ENCODE measurements at regions of chr2 and their contacts with region 1.

Region 1: DNA sequence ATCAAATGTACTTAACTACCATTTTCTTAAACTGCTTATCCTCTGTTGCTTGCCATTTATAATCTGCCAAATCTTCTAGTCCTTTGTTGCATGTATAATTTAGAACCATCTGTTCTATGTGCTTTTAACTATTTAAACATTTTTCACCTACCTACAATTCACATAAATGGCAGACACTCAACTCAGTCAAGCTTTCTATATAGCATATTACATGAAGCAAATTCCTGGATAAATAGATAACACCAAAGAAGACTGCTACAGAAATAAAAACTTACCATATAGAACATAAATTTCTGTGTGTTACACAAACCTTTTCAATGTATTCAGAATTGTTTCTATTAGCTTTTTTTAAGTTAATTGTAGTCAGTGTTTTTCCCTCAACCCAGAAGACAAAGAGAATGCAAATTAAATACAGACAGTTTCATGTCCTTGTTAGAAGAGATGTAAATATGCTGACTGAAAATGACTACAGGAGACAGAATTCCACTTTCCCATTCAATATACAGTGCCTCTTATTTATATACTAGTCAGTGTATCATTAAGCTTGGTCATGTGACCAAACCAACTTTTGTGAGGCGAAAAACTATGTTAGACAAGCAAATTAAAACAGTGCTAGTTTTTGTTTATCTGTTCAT is 2.6 kb downstream of the BAZ2B start:
- DNase-seq: no peak
- H3K4me3 ChIP-seq: peak overlapping the region in 2 of 4 donors; percentile 80 to 84
- H3K27ac ChIP-seq: peak overlapping the region; percentile 93 to 99 (median 97)
- H3K4me1 ChIP-seq: peaks cover 7 to 63% of the 10 kb centered on the region in 2 donors
- H3K27me3 ChIP-seq: no peaks in the 10 kb centered on the region
- CTCF ChIP-seq: no peak
- POLR2A ChIP-seq: peak in 1 of 2 donors; percentile 18

Region 2: DNA sequence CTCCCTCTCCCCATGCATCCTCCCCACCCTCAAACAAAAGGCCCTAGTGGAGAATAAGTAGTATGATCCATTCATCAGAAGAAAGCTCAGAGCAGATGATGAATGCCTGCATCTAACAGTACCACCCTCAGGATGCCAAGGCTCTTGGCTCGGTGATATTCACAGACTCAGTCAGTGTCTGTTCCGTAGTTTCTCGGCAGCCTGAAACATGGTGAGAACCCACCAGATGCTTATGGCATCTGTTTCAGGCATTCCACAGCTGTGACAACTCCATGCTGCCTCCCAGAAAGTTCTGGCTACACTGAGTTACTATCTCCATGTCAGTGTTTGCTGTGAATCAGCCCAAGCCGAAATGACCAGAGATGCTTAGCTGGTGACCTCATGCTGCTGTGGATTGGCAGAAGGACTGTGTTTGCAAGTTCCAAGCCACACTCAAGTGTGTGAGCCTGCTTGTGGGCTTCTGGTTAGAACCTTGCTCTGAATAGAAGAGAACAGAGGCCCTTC is 411.1 kb before region 1 on chr2:
- intact Hi-C with region 1: no loop called
- DNase-seq: peak in 6 of 7 donors; percentile 26 to 73 (median 42)
- H3K4me3 ChIP-seq: no peak overlapping the region
- H3K27ac ChIP-seq: peak overlapping the region in 1 of 5 donors; percentile 39
- H3K4me1 ChIP-seq: peaks cover 0 to 3% of the 10 kb centered on the region in 2 donors
- H3K27me3 ChIP-seq: no peaks in the 10 kb centered on the region
- CTCF ChIP-seq: no peak
- POLR2A ChIP-seq: no peak

Region 3: DNA sequence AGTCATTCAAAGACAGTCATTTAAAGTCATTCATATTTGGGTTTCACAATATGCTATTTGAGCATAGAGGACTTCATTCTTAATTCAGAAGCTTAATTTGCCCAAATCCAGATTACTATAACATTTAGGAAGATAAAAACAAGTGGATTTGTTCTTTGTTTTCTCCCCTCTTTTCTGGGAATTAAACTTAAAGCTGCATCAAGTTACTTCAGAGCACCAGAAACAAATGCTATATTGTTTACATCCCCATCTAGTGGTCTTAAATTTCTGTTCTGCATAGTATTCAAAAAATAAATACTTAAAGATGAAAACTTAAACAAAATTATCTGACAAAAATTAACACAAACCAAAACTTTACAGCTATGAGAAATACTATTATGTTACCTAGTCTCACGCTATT is 63.9 kb after region 1 on chr2:
- intact Hi-C with region 1: no loop called
- DNase-seq: no peak
- H3K4me3 ChIP-seq: no peak overlapping the region
- H3K27ac ChIP-seq: no peak overlapping the region
- H3K4me1 ChIP-seq: no peaks in the 10 kb centered on the region
- H3K27me3 ChIP-seq: no peaks in the 10 kb centered on the region
- CTCF ChIP-seq: peak in 1 of 6 experiments; percentile 39
- POLR2A ChIP-seq: no peak

Region 4: GRCh38 chr2:159712143-159712928 is 98.6 kb after region 1 on chr2 and contains the start of gene MARCHF7:
- intact Hi-C with region 1: loop called in 1 of 2 experiments (anchors 5 kb)
- DNase-seq: peak; percentile 97 to 98 (median 98)
- H3K4me3 ChIP-seq: peak within 1 kb of the TSS; percentile 43 to 99 (median 81)
- H3K27ac ChIP-seq: peak within 1 kb of the TSS; percentile 96 to 100 (median 98)
- H3K4me1 ChIP-seq: peaks cover 29 to 44% of the 10 kb centered on the region in 2 donors
- H3K27me3 ChIP-seq: no peaks in the 10 kb centered on the region
- CTCF ChIP-seq: peak; percentile 17 to 75 (median 49)
- POLR2A ChIP-seq: peak; percentile 95 to 99
- total RNA-seq, gene MARCHF7: 53.1 to 105 (median 65.9) TPM

Measured in adrenal gland (tissue), 19 donors.